A673 (cell line): ENCODE measurements at regions of chr7 and their contacts with region 1.

Region 1: DNA sequence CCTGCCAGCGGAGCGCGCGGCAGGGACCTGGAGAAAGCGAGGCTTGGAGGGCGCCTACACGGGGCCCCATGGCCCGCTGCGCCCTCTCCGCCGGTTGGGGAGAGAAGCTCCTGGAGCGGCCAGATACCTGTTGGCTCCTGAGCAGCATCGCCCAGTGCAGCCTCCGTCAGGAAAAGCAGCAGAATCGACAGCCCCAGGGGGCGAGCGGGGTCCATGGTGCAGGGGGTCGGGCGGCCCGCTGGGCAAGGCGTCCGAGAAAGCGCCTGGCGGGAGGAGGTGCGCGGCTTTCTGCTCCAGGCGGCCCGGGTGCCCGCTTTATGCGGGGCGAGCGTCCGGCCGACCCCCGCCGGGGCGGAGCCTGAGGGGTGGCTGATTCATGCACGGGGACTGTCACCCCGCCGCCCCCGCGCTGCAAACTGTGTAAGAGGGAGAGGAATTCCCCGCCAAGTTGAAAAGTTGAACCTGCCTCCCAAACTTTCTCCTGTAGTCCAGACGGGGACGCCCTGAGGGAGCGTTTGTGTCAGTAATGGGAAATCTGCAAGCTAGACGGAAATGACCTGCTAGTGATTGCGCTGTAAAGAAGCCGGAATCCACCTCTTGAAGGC is at the start of gene TFPI2:
- DNase-seq: peak; percentile 52
- H3K4me3 ChIP-seq: peak within 1 kb of the TSS; percentile 58
- H3K27ac ChIP-seq: no peak within 1 kb of the TSS
- H3K4me1 ChIP-seq: peaks cover 10% of the 10 kb centered on the region
- H3K27me3 ChIP-seq: no peaks in the 10 kb centered on the region
- CTCF ChIP-seq: no peak
- total RNA-seq, gene TFPI2: 6.1 and 7.8 TPM in 2 replicates

Region 2: GRCh38 chr7:93923942-93924341 is 33.4 kb after region 1 on chr7:
- CTCF ChIA-PET with region 1: no interaction called
- POLR2A ChIA-PET with region 1: no interaction called
- intact Hi-C with region 1: loop called (anchors 1 kb)
- DNase-seq: no peak
- H3K4me3 ChIP-seq: peak overlapping the region; percentile 57
- H3K27ac ChIP-seq: no peak overlapping the region
- H3K4me1 ChIP-seq: peaks cover 26% of the 10 kb centered on the region
- H3K27me3 ChIP-seq: no peaks in the 10 kb centered on the region
- CTCF ChIP-seq: no peak

Region 3: DNA sequence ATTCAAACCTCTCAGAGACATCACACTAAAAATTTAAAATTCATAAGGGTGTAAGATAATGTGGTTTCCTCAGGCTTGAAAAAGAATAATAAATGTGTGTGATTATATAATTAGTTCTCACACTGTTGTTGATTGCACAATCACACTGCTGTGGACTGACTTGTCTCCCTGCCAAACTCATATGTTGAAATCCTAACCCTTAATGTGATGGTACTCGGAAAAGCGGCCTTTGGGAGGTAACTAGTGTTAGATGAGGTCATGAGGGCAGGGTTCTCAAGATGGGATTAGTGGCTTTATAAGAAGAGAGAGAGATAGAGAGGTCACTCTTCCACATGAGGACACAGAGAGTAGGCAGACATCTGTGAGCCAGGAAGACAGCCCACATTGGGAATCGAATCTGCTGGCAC is 375.7 kb after region 1 on chr7:
- CTCF ChIA-PET with region 1: no interaction called
- POLR2A ChIA-PET with region 1: no interaction called
- intact Hi-C with region 1: loop called (anchors 5 kb)
- DNase-seq: peak; percentile 89
- H3K4me3 ChIP-seq: peak overlapping the region; percentile 7
- H3K27ac ChIP-seq: peak overlapping the region; percentile 56
- H3K4me1 ChIP-seq: peaks cover 55% of the 10 kb centered on the region
- H3K27me3 ChIP-seq: no peaks in the 10 kb centered on the region
- CTCF ChIP-seq: no peak